AG04449 (cell line): ENCODE measurements at regions of chr5 and their contacts with region 1.

Region 1: GRCh38 chr5:179212870-179213269 is 132.4 kb downstream of the ADAMTS2 start:
- DNase-seq: no peak
- H3K4me3 ChIP-seq: no peak overlapping the region
- CTCF ChIP-seq: peak; percentile 83

Region 2: DNA sequence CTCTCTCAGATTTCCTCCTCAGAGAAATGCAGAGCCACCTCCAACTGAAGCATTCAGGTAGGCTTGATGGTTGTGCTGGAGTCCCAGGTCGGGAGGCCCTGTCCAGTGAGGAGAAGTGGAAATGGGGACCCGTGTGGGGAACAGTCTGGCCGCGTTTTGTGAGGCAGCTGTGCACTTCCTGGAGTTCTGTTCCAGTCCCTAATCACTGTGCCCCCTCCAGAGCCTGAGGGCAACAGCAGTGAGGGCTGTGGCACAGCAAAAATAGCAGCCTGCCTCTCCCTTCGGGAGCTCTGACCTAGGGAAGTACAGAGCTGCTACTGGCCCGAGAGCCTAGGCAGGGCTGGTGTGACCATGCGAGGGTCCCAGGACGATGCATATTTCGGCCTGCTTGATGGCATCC is 336.7 kb before region 1 on chr5:
- CTCF ChIA-PET with region 1: no interaction called
- POLR2A ChIA-PET with region 1: no interaction called
- DNase-seq: no peak
- H3K4me3 ChIP-seq: no peak overlapping the region
- CTCF ChIP-seq: no peak

Region 3: DNA sequence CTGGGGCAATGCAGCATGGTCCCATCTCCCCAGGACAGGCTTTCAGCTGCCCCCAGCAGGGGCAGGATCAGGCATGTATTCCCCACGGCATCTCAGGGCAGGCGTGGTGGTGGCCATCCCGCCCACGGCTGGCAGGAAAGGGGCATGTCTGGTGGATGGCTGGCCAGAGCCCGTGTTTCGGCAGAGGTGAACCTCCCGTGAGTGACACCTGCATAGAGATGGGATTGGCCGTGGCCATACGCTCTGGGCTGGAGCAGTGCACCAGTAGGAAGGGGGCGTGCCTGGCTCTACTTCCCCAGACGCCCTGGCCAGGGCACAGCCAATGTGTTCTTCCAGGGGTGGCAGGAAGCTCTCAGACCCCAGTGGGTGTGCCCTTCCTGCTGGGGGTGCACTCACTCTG is 13.6 kb before region 1 on chr5:
- CTCF ChIA-PET with region 1: interaction called, 15 read pairs
- POLR2A ChIA-PET with region 1: no interaction called
- DNase-seq: no peak
- H3K4me3 ChIP-seq: no peak overlapping the region
- CTCF ChIP-seq: no peak

Region 4: GRCh38 chr5:179250561-179251225 is 37.8 kb after region 1 on chr5:
- CTCF ChIA-PET with region 1: no interaction called
- POLR2A ChIA-PET with region 1: no interaction called
- DNase-seq: no peak
- H3K4me3 ChIP-seq: no peak overlapping the region
- CTCF ChIP-seq: no peak

Region 5: DNA sequence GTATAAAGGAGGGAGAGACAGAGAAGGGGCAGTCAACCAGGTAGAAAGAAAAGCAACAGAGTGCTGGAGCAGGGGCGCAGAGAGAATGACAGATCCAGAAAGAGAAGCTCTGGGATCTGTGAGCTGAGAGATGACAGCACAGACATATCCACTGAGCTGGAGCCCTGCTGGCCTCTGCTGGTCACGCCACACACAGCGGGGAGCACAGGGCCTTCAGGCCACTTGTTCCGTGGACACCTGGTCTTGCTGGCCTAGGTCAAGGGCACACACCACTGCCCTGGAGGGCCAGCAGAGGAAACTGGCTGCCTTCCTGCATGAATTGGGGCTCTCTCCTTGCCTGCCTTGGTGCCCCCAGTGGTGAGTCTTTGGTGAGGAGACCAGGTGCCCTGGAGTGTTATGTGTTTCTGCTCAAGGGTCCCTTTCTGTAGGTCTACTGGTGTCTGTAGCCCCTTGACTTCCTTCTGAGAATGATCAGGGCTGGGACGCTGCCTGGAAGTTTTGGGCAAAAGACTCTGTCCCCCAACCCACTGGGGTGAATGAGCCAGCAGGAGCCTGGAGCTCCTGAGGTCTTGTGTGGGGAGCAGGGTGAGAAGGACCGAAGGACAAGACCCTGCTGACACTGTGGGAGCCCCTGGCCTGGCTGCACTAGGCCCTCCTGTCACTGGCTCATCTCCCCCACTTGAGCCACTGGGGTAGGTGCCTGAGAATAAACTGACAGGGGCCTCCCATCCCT is 191.6 kb after region 1 on chr5:
- CTCF ChIA-PET with region 1: interaction called, 11 read pairs
- POLR2A ChIA-PET with region 1: no interaction called
- DNase-seq: no peak
- H3K4me3 ChIP-seq: no peak overlapping the region
- CTCF ChIP-seq: peak; percentile 65